Dendritic cell treated with granulocyte-macrophage colony-stimulating factor and Interleukin-4, amounts not matched to agents 40 ng/mL and 50 ng/mL, for 4 days (primary cell): ENCODE measurements at regions of chr12 and their contacts with region 1.

Region 1: DNA sequence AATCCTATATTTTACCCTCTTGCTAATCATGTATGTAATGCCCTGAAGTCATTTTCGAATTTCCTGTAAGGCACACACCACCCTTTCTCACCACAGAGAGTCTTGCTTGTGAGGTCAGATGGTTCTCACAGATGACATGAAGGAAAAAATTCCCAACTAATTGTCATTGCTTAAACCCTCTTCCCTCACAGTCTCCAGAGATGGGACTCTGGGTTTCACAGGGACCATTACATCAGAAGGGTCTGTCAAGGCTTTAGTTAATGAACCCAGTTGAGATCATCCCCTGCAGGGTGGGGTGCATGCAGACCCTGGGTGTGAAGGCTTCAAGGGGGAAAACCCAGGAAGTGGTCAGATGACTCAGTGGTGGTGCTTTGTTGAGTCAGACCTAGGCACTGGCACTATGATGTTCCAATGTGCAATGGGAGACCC is 229.6 kb downstream of the BCAT1 start:
- H3K4me3 Mint-ChIP-seq: no peak overlapping the region
- H3K27ac Mint-ChIP-seq: no peak overlapping the region
- H3K4me1 Mint-ChIP-seq: peaks cover 23% of the 10 kb centered on the region
- H3K27me3 Mint-ChIP-seq: no peaks in the 10 kb centered on the region

Region 2: GRCh38 chr12:23648546-23648945 is 1070.8 kb before region 1 on chr12:
- intact Hi-C with region 1: no loop called
- H3K4me3 Mint-ChIP-seq: no peak overlapping the region
- H3K27ac Mint-ChIP-seq: no peak overlapping the region
- H3K4me1 Mint-ChIP-seq: no peaks in the 10 kb centered on the region
- H3K27me3 Mint-ChIP-seq: no peaks in the 10 kb centered on the region

Region 3: GRCh38 chr12:24596768-24597388 is 122.4 kb before region 1 on chr12:
- intact Hi-C with region 1: loop called (anchors 10 kb)
- H3K4me3 Mint-ChIP-seq: no peak overlapping the region
- H3K27ac Mint-ChIP-seq: no peak overlapping the region
- H3K4me1 Mint-ChIP-seq: peaks cover 8% of the 10 kb centered on the region
- H3K27me3 Mint-ChIP-seq: peaks cover 5% of the 10 kb centered on the region